ENCODE measurements at regions of chr12 and their contacts with region 1.

Region 1: DNA sequence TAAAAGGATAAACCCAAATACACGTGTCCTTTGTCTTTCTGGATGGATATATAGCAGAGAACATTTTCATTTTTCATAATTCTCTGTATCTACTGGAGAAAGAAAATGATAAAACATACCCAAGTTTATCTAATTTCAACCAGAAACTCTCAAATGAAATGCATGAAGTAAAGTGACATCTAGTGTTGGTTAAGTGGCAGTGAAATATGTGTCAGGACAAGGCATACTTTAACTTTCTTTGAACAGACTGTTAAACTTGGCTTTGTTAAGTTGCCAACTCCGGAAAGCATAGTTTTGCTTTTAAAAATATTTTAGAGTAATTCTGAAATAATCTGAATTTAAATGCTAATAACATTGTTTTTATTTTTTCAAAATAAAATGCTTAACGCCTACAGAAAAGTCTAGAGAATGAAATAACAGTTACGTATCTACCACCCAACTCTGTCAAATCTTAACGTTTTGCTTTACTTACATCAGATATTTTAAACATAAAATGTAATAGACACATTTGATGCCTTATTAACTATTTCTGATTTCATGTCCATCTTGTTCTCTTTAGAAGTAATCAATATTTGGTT is 25.2 kb upstream of the NTN4 start:
- DNase-seq: no peak
- ATAC-seq: no peak
- H3K4me3 Mint-ChIP-seq: no peak overlapping the region
- H3K27ac Mint-ChIP-seq: no peak overlapping the region
- H3K4me1 Mint-ChIP-seq: no peaks in the 10 kb centered on the region
- H3K27me3 Mint-ChIP-seq: peaks cover 19% of the 10 kb centered on the region

Region 2: GRCh38 chr12:95117178-95117599 is 698.5 kb before region 1 on chr12:
- CTCF ChIA-PET with region 1: no interaction called
- POLR2A ChIA-PET with region 1: no interaction called
- intact Hi-C with region 1: loop called in 1 of 2 experiments (anchors 5 kb)
- DNase-seq: peak; percentile 75
- ATAC-seq: peak; percentile 76
- H3K4me3 Mint-ChIP-seq: no peak overlapping the region
- H3K27ac Mint-ChIP-seq: no peak overlapping the region
- H3K4me1 Mint-ChIP-seq: peaks cover 4% of the 10 kb centered on the region
- H3K27me3 Mint-ChIP-seq: no peaks in the 10 kb centered on the region

Region 3: GRCh38 chr12:95582230-95583058 is 233.3 kb before region 1 on chr12:
- CTCF ChIA-PET with region 1: no interaction called
- POLR2A ChIA-PET with region 1: no interaction called
- intact Hi-C with region 1: loop called in 1 of 2 experiments (anchors 1 kb)
- DNase-seq: no peak
- ATAC-seq: no peak
- H3K4me3 Mint-ChIP-seq: no peak overlapping the region
- H3K27ac Mint-ChIP-seq: no peak overlapping the region
- H3K4me1 Mint-ChIP-seq: no peaks in the 10 kb centered on the region
- H3K27me3 Mint-ChIP-seq: peaks cover 9% of the 10 kb centered on the region

Region 4: GRCh38 chr12:95623585-95624042 is 192.1 kb before region 1 on chr12:
- CTCF ChIA-PET with region 1: no interaction called
- POLR2A ChIA-PET with region 1: no interaction called
- intact Hi-C with region 1: loop called (anchors 5 to 10 kb)
- DNase-seq: peak; percentile 59
- ATAC-seq: no peak
- H3K4me3 Mint-ChIP-seq: no peak overlapping the region
- H3K27ac Mint-ChIP-seq: no peak overlapping the region
- H3K4me1 Mint-ChIP-seq: no peaks in the 10 kb centered on the region
- H3K27me3 Mint-ChIP-seq: peaks cover 2% of the 10 kb centered on the region